ENCODE measurements at regions of chr11 and their contacts with region 1.

Region 1: DNA sequence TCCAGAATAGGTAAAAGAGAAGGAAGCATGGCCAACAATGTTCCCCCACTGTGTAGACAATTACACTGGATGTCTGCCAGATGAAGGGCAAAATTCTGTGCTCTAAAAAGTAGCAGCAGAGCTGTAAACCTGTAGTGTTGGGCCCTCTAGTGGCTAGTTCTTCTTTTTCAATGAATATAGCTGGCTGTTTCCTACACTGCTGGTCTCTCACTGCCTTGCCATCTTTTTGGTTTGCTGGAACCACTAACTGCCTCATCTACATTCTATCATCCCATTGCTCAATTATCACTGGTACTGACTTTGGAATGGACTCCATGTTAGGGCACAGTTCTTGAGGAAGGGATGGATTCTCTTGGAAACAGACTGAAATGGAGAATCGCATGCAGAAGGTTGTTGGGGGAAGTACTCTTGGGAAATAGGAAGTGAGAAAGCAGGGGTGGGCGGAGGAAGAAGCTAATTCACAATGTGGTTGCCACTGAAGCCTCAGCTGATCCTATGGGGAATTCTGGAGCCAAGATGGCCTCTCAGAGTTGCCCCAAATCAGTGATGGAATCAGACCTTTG is 17.9 kb downstream of the KCNE3 start:
- DNase-seq: peak; percentile 48 to 77 (median 64)
- ATAC-seq: peak; percentile 79
- H3K4me3 ChIP-seq: no peak overlapping the region
- H3K27ac ChIP-seq: no peak overlapping the region
- H3K4me1 ChIP-seq: peaks cover 6% of the 10 kb centered on the region
- H3K27me3 ChIP-seq: no peaks in the 10 kb centered on the region
- CTCF ChIP-seq: peak; percentile 42 to 90 (median 76)
- POLR2A ChIP-seq: no peak

Region 2: DNA sequence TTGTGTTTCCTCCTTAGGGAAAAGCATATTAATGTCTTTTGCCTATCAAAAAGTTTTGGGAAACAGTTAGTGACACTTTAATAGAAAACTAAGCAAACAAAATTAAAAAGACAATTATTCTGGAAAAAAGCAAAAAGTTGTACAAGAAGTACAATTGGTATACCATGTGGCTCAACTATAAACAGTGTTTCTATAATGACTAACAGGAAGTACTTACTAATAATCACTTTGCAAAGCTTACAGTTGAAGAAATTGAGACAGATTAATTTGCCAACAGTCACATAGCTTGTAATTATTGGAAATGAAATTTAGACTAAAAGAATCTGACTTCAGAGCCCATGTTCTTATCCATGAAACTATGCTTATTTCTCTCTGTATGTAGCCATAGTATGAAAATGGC is 253.6 kb before region 1 on chr11:
- intact Hi-C with region 1: no loop called
- DNase-seq: no peak
- ATAC-seq: no peak
- H3K4me3 ChIP-seq: no peak overlapping the region
- H3K27ac ChIP-seq: no peak overlapping the region
- H3K4me1 ChIP-seq: no peaks in the 10 kb centered on the region
- H3K27me3 ChIP-seq: no peaks in the 10 kb centered on the region
- CTCF ChIP-seq: no peak
- POLR2A ChIP-seq: no peak

Region 3: DNA sequence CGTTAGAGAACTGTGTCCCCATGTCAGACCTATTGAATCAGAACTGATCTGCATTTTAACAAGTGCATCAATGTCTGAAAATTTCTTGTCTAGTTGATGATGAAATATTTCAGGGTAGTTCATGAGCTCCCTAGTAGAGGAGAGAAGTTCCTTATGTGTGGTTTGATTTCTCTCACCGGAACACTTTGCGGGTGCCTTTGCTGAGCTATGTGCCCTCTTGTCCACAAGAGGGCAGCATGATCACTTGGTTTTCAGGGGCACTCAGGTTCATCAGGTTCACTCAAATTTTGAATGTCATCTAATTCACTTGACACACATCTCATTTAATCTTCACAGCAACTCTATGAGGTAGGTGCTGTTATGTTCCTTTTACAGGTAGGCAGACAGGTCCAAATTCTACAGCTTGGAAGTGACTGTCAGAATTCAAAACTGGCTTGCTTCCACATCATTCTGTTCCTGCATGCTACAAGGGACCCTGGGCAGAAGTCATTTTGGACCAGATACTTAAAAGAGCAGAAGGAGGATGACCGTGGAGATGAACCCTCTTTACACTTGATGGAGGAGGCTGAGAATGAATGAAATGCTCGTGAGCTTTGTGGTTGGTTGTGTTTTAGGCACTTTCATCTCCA is 193.6 kb before region 1 on chr11:
- intact Hi-C with region 1: loop called (anchors 5 kb)
- DNase-seq: peak; percentile 55 to 66 (median 58)
- ATAC-seq: peak; percentile 75
- H3K4me3 ChIP-seq: no peak overlapping the region
- H3K27ac ChIP-seq: no peak overlapping the region
- H3K4me1 ChIP-seq: no peaks in the 10 kb centered on the region
- H3K27me3 ChIP-seq: no peaks in the 10 kb centered on the region
- CTCF ChIP-seq: peak; percentile 74 to 87 (median 83)
- POLR2A ChIP-seq: no peak

Region 4: GRCh38 chr11:74288161-74288560 is 161.3 kb before region 1 on chr11:
- intact Hi-C with region 1: no loop called
- DNase-seq: peak in 1 of 4 donors; percentile 20
- ATAC-seq: peak; percentile 50
- H3K4me3 ChIP-seq: no peak overlapping the region
- H3K27ac ChIP-seq: no peak overlapping the region
- H3K4me1 ChIP-seq: peaks cover 8% of the 10 kb centered on the region
- H3K27me3 ChIP-seq: no peaks in the 10 kb centered on the region
- CTCF ChIP-seq: no peak
- POLR2A ChIP-seq: no peak

Region 5: DNA sequence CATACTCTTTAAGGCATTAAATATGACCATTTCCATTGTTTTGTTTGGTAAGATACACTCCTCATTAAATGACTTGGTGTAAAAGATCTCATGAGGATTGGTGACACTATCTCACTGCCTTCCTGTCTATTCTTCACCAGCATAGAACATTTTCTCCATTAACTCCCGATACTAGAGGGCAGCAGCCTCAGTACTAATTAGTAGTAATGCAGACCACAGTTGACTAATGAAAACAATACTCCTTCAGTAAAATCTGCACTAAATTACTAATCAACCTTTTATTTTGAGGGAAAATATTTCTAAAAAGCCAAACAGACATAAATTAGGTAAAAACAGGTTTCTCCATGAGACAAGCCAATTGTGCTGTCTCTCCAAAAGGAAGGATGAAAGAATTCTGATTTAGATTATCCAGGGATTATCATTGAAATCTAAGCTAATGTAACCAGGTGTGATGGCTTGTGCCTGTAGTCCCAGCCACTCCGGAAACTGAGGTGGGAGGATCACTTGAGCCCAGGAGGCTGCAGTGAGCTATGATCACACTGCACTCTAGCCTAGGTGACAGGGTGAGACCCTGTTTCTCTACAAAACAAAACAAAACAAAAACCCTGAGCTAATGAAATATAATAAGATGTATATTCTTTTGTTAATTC is 60.6 kb before region 1 on chr11:
- intact Hi-C with region 1: loop called (anchors 5 kb)
- DNase-seq: peak; percentile 65 to 80 (median 74)
- ATAC-seq: peak; percentile 71
- H3K4me3 ChIP-seq: no peak overlapping the region
- H3K27ac ChIP-seq: no peak overlapping the region
- H3K4me1 ChIP-seq: peaks cover 3% of the 10 kb centered on the region
- H3K27me3 ChIP-seq: no peaks in the 10 kb centered on the region
- CTCF ChIP-seq: peak; percentile 9 to 82 (median 77)
- POLR2A ChIP-seq: no peak

Region 6: GRCh38 chr11:74570266-74571061 is 121.0 kb after region 1 on chr11:
- intact Hi-C with region 1: loop called (anchors 5 kb)
- DNase-seq: peak; percentile 67 to 79 (median 71)
- ATAC-seq: peak; percentile 86
- H3K4me3 ChIP-seq: no peak overlapping the region
- H3K27ac ChIP-seq: peak overlapping the region in 3 of 4 donors; percentile 63 to 79 (median 63)
- H3K4me1 ChIP-seq: peaks cover 59% of the 10 kb centered on the region
- H3K27me3 ChIP-seq: no peaks in the 10 kb centered on the region
- CTCF ChIP-seq: peak; percentile 44 to 88 (median 83)
- POLR2A ChIP-seq: no peak

Measured in body of pancreas (tissue), 4 donors.